ENCODE measurements at regions of chr5 and their contacts with region 1.

Region 1: GRCh38 chr5:111278845-111279504 is 54.8 kb downstream of the CAMK4 start:
- DNase-seq: peak; percentile 90
- ATAC-seq: peak; percentile 97
- H3K4me3 Mint-ChIP-seq: no peak overlapping the region
- H3K27ac Mint-ChIP-seq: peak overlapping the region; percentile 70
- H3K4me1 Mint-ChIP-seq: peaks cover 34% of the 10 kb centered on the region
- H3K27me3 Mint-ChIP-seq: no peaks in the 10 kb centered on the region

Region 2: GRCh38 chr5:111169269-111169668 is 109.7 kb before region 1 on chr5:
- CTCF ChIA-PET with region 1: interaction called, 17 read pairs
- POLR2A ChIA-PET with region 1: no interaction called
- DNase-seq: no peak
- ATAC-seq: no peak
- H3K4me3 Mint-ChIP-seq: no peak overlapping the region
- H3K27ac Mint-ChIP-seq: no peak overlapping the region
- H3K4me1 Mint-ChIP-seq: no peaks in the 10 kb centered on the region
- H3K27me3 Mint-ChIP-seq: peaks cover 5% of the 10 kb centered on the region

Region 3: DNA sequence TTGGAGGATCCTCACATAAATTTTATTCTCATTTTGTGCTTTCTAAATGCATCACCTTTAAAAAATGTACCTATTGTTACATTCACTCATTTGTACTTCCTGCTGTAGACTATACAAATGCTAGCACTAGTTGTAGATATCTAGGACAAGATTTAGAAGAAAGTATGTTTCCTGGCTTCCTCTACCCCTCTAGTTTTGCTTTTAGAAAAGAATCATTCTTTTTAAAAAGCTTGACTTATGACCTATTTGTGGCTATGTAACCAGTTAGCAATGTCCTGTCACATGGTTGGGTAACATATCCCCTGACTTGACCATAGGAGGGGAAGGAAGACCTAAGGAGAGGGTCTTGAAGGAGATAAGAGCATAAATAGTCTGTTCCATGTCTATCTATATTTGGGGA is 41.5 kb before region 1 on chr5:
- CTCF ChIA-PET with region 1: interaction called, 64 read pairs
- POLR2A ChIA-PET with region 1: interaction called, 6 read pairs
- DNase-seq: no peak
- ATAC-seq: peak; percentile 17
- H3K4me3 Mint-ChIP-seq: peak overlapping the region; percentile 72
- H3K27ac Mint-ChIP-seq: peak overlapping the region; percentile 91
- H3K4me1 Mint-ChIP-seq: peaks cover 80% of the 10 kb centered on the region
- H3K27me3 Mint-ChIP-seq: no peaks in the 10 kb centered on the region

Region 4: GRCh38 chr5:111254613-111255012 is 24.4 kb before region 1 on chr5:
- CTCF ChIA-PET with region 1: interaction called, 29 read pairs
- POLR2A ChIA-PET with region 1: no interaction called
- DNase-seq: peak; percentile 53
- ATAC-seq: peak; percentile 73
- H3K4me3 Mint-ChIP-seq: peak overlapping the region; percentile 36
- H3K27ac Mint-ChIP-seq: peak overlapping the region; percentile 76
- H3K4me1 Mint-ChIP-seq: peaks cover 66% of the 10 kb centered on the region
- H3K27me3 Mint-ChIP-seq: no peaks in the 10 kb centered on the region

Region 5: DNA sequence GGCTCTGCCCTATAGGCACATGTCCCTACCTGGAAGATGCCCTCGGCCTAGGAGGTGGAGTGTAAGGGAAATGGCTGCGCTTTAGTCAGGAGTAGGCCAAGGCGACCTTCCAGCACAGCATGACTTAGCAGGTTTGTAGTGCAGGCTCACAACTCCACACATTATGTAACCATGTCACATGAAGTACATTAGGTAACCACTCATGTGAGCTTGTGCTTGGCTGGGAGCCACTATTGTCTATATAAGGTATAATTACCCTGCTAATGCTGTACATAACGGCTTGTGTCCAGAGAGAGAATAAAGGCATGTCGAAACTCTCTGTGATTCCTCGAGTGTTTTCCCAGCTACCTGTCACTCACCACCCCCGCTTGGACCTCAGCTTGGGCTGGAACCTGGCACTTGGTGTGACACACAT is 20.1 kb after region 1 on chr5:
- CTCF ChIA-PET with region 1: interaction called, 23 read pairs
- POLR2A ChIA-PET with region 1: no interaction called
- DNase-seq: no peak
- ATAC-seq: no peak
- H3K4me3 Mint-ChIP-seq: no peak overlapping the region
- H3K27ac Mint-ChIP-seq: no peak overlapping the region
- H3K4me1 Mint-ChIP-seq: peaks cover 12% of the 10 kb centered on the region
- H3K27me3 Mint-ChIP-seq: no peaks in the 10 kb centered on the region